WTC11 (cell line): ENCODE measurements at regions of chr12 and their contacts with region 1.

Region 1: DNA sequence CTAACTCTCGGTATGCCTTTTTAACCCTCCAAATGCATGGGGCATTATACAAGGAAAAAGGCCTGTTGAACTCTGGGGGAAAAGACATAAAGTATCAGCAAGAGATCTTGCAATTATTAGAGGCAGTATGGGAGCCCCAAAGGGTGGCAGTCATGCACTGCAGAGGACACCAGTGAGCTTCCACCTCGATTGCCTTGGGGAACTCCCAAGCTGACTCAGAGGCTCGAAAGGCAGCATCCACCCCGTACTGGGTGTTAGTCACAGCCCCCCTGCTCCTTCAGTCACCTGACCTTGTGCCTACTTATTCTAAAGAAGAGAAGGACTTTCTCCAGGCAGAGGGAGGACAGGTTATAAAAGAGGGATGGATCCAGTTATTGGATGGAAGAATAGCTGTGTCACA is 781.4 kb upstream of the TMEM132C start:
- DNase-seq: no peak
- ATAC-seq: no peak
- H3K4me3 Mint-ChIP-seq: no peak overlapping the region
- H3K27ac Mint-ChIP-seq: no peak overlapping the region
- H3K4me1 Mint-ChIP-seq: no peaks in the 10 kb centered on the region
- H3K27me3 Mint-ChIP-seq: no peaks in the 10 kb centered on the region
- CTCF ChIP-seq: no peak

Region 2: GRCh38 chr12:127416796-127417195 is 68.7 kb before region 1 on chr12:
- CTCF ChIA-PET with region 1: no interaction called
- POLR2A ChIA-PET with region 1: no interaction called
- DNase-seq: no peak
- ATAC-seq: no peak
- H3K4me3 Mint-ChIP-seq: no peak overlapping the region
- H3K27ac Mint-ChIP-seq: no peak overlapping the region
- H3K4me1 Mint-ChIP-seq: peaks cover 11% of the 10 kb centered on the region
- H3K27me3 Mint-ChIP-seq: peaks cover 6% of the 10 kb centered on the region
- CTCF ChIP-seq: no peak

Region 3: GRCh38 chr12:127455347-127456265 is 29.9 kb before region 1 on chr12:
- CTCF ChIA-PET with region 1: interaction called, 10 read pairs
- POLR2A ChIA-PET with region 1: no interaction called
- DNase-seq: peak; percentile 63
- ATAC-seq: peak; percentile 91
- H3K4me3 Mint-ChIP-seq: peak overlapping the region; percentile 45
- H3K27ac Mint-ChIP-seq: no peak overlapping the region
- H3K4me1 Mint-ChIP-seq: no peaks in the 10 kb centered on the region
- H3K27me3 Mint-ChIP-seq: peaks cover 49% of the 10 kb centered on the region
- CTCF ChIP-seq: no peak